ENCODE measurements at regions of chr5 and their contacts with region 1.

Region 1: DNA sequence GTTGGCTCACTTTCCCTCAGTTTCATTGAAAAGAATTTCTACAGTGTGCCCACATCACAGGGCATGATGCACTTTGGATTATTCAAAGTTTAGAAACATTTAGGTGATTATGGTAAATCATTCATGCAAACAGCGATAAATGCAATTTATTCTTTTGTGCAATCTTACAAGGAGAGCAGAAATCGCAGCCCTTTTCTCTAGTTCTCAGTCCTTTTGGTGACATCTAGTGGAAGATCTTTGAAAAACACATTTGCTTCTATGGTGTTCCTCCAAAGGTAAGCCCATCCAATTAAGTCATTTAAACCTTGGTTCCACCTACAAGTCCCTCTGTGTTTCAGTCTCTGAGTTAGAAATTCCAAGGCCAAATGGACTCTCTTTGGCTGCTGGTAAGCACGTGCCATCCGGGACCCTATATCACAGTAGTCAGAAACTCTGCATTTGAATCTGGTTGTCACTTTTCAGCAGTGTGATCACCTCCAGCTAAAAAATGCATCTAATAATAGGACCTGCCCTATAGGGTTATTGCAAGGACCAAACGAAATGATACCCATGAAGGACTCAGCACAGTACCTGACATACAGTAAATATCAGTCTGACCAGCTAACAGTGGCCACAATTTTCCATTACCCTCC is 66.4 kb downstream of the MACROH2A1 start:
- DNase-seq: no peak
- H3K4me3 ChIP-seq: no peak overlapping the region
- H3K27ac ChIP-seq: no peak overlapping the region
- H3K4me1 ChIP-seq: no peaks in the 10 kb centered on the region
- H3K27me3 ChIP-seq: no peaks in the 10 kb centered on the region
- CTCF ChIP-seq: peak; percentile 42

Region 2: DNA sequence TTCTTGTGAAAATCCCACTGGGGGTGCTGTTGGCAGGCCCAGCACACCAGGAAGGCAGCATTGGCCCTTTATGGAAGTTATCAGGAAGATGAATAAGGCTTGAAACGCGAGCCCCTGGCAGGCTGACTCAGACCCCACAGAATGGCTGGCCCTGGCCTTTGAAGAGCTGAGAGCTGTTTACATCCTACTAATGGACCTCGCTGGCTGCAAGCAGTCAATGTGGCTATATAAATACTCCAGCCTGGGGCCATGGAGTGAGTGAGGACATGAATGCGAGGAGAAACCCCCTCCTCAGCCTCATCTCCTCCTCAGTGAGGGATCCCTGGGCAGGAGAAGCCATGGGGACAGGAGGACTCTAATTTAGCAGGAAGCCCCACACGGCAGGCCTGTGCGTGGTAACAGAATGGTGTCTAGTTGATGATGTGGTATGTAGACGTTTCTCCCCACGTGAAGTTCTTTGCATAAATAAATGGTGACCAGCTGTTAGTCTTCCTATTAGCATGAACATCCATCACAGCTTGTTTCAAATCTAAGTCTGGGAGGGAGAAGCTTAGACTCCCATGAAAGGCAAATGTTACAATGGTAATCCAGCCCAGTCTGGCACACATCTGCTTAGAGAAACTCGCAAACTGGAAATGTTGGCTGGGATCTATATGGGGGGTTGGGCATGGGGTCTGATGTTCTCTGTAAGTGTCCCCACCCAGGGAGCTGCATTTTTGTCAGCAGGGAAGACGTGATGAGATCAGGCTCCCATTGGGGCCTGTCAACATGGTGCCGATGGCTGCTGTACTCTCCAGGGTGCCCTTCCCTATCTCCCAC is 123.5 kb before region 1 on chr5:
- intact Hi-C with region 1: loop called (anchors 5 kb)
- DNase-seq: peak; percentile 27
- H3K4me3 ChIP-seq: no peak overlapping the region
- H3K27ac ChIP-seq: peak overlapping the region; percentile 39
- H3K4me1 ChIP-seq: no peaks in the 10 kb centered on the region
- H3K27me3 ChIP-seq: no peaks in the 10 kb centered on the region
- CTCF ChIP-seq: no peak

Measured in colonic mucosa (tissue), 4 donors.